RWPE1 (cell line): ENCODE measurements at regions of chr1 and their contacts with region 1.

Region 1: DNA sequence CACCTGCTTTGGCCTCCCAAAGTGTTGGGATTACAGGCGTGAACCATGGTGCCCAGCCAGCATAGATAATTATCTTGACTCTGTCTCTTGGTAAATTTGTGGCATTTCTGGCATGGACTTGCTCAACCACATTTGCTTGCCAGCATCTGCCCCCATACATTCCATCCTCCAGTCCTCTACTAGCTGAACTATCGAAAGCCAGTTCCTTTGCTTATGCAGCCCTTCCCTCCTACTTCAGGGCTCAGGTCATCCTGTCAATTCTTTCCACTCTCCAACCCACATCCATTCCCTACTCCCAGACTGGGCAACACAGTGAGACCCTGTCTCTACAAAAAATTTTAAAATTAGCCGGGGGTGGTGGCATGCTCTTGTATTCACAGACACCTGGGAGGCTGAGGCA is 13.0 kb upstream of the UQCRHL start:
- DNase-seq: no peak
- H3K27ac ChIP-seq: peak overlapping the region; percentile 35; the same call in 1 of the 2 replicates
- CTCF ChIP-seq: no peak

Region 2: GRCh38 chr1:15231714-15232201 is 588.7 kb before region 1 on chr1:
- CTCF ChIA-PET with region 1: no interaction called
- POLR2A ChIA-PET with region 1: no interaction called
- DNase-seq: no peak
- H3K27ac ChIP-seq: no peak overlapping the region
- CTCF ChIP-seq: no peak

Region 3: GRCh38 chr1:15799937-15800835 is 20.3 kb before region 1 on chr1:
- CTCF ChIA-PET with region 1: interaction called, 11 read pairs
- POLR2A ChIA-PET with region 1: no interaction called
- DNase-seq: peak; percentile 98
- H3K27ac ChIP-seq: peak overlapping the region; percentile 99
- CTCF ChIP-seq: no peak